ENCODE measurements at regions of chr17 and their contacts with region 1.

Region 1: DNA sequence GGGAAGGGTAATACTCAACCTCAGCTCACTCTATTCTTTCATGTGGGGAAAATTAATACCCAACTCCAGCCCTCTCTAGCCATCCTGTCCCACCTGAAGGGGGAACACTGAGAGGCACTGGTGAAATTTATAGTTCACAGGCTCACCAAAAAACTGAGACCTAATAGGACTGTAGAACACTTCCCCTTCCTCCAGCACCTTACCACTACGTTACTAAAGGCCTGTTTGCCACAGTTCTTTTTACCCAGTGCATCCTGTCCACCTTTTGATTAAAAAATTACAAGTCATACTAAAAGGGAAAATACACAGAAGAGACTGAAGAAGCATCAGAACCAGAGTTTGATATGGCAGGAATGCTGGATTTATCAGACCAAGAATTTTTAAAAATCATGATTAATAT is 26.0 kb downstream of the DHRS7B start:
- DNase-seq: no peak
- ATAC-seq: no peak
- H3K4me3 Mint-ChIP-seq: no peak overlapping the region
- H3K27ac Mint-ChIP-seq: no peak overlapping the region
- H3K4me1 Mint-ChIP-seq: peaks cover 10% of the 10 kb centered on the region
- H3K27me3 Mint-ChIP-seq: no peaks in the 10 kb centered on the region

Region 2: GRCh38 chr17:21081967-21082366 is 70.8 kb before region 1 on chr17:
- CTCF ChIA-PET with region 1: no interaction called
- POLR2A ChIA-PET with region 1: no interaction called
- intact Hi-C with region 1: no loop called
- DNase-seq: no peak
- ATAC-seq: no peak
- H3K4me3 Mint-ChIP-seq: no peak overlapping the region
- H3K27ac Mint-ChIP-seq: no peak overlapping the region
- H3K4me1 Mint-ChIP-seq: no peaks in the 10 kb centered on the region
- H3K27me3 Mint-ChIP-seq: peaks cover 8% of the 10 kb centered on the region

Region 3: DNA sequence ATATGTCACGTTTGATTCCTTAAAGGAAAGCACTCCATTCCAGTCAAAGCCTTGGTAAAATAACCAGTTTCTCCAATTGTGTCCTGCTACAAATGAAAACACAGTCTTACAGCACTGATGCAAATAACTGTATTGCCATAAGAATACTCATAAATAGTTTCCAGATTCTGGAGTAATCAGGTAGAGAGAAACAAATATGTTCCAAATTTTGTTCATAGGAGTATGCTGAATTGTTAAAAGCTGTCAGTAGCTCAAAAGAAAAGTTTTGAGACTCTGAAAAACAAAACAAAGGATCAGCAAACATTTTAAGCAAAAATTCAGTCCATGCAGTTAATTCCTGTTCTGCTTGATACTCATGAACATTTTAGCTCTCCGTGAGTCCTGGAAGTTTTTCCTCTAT is 18.2 kb before region 1 on chr17:
- CTCF ChIA-PET with region 1: no interaction called
- POLR2A ChIA-PET with region 1: interaction called, 6 read pairs
- intact Hi-C with region 1: loop called in 1 of 2 experiments (anchors 2 kb)
- DNase-seq: no peak
- ATAC-seq: no peak
- H3K4me3 Mint-ChIP-seq: no peak overlapping the region
- H3K27ac Mint-ChIP-seq: no peak overlapping the region
- H3K4me1 Mint-ChIP-seq: no peaks in the 10 kb centered on the region
- H3K27me3 Mint-ChIP-seq: no peaks in the 10 kb centered on the region